ENCODE measurements at regions of chr15 and their contacts with region 1.

Region 1: DNA sequence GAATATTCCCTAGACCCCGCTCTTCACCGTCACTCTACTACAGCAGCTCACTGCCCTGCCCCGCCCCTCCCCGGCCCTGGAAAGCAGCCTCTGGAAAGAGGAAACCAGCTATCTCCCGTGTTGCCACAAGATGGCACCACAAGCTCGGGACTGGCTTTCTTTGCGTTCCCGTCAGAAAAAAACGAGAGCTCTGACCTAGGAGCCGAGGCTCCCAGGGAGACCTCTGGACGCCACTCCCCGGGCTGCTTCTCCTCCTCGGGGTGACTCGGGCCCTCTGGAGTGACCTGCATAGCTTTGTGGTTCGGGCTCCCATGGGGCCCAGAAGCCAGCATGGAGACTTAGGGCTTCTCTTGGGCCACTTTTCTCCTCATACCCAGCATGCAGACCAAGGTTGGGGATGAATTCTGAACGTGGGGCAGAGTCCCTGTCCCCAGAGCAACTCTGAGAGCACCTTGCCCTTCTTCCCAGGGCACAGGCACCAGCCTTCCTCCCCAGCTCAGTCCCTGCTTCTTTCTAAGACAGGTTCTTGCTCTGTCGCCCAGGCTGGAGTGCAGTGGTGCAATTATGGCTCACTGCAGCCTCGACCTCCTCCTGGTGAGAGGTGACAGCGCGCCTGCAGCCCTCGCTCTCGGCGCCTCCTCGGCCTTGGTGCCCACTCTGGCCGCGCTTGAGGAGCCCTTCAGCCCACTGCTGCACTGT is 19.0 kb downstream of the STOML1 start:
- DNase-seq: peak; percentile 90
- H3K4me3 Mint-ChIP-seq: peak overlapping the region; percentile 10
- H3K27ac Mint-ChIP-seq: no peak overlapping the region
- H3K4me1 Mint-ChIP-seq: peaks cover 26% of the 10 kb centered on the region
- H3K27me3 Mint-ChIP-seq: peaks cover 19% of the 10 kb centered on the region

Region 2: DNA sequence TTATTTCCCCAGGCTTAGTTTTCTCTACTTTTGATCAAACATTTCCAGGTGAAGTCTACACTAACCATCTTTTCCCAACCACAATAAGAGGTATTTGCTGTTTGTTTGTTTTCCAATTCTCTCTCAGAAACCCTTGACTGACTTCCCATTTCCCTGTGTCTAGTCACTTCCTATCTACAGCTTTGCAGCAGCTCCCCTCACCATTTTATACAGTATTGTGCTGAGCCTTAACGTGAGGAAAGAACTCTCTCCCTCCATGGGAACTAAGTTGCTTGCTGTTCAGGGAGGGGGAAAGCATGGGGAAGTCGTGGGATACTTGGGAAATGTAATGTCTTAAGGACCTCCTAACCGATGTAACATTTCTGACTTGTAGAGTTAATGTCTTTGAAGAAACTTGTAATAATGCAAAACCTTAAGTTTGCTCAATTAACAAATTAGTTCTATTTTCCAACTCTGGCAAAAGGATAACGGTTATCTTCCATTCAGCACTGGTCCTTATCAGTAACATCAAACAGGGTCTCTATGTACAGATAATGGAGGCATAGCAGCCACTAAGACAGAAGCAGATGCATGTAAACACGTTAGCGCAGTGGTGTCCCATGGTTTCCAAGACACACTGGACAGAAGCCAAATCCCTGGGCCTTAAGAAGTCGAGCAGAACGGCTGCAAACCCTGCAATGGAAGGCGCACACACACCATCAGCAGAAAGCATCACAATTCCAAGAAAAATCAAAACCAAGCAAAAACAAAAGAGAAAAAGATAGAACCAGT is 379.6 kb before region 1 on chr15:
- CTCF ChIA-PET with region 1: no interaction called
- POLR2A ChIA-PET with region 1: no interaction called
- intact Hi-C with region 1: no loop called
- DNase-seq: no peak
- H3K4me3 Mint-ChIP-seq: no peak overlapping the region
- H3K27ac Mint-ChIP-seq: no peak overlapping the region
- H3K4me1 Mint-ChIP-seq: peaks cover 24% of the 10 kb centered on the region
- H3K27me3 Mint-ChIP-seq: no peaks in the 10 kb centered on the region

Region 3: GRCh38 chr15:73950831-73951561 is 22.1 kb before region 1 on chr15:
- CTCF ChIA-PET with region 1: interaction called, 15 read pairs
- POLR2A ChIA-PET with region 1: no interaction called
- intact Hi-C with region 1: no loop called
- DNase-seq: peak; percentile 81
- H3K4me3 Mint-ChIP-seq: no peak overlapping the region
- H3K27ac Mint-ChIP-seq: peak overlapping the region; percentile 52
- H3K4me1 Mint-ChIP-seq: peaks cover 6% of the 10 kb centered on the region
- H3K27me3 Mint-ChIP-seq: no peaks in the 10 kb centered on the region

Region 4: DNA sequence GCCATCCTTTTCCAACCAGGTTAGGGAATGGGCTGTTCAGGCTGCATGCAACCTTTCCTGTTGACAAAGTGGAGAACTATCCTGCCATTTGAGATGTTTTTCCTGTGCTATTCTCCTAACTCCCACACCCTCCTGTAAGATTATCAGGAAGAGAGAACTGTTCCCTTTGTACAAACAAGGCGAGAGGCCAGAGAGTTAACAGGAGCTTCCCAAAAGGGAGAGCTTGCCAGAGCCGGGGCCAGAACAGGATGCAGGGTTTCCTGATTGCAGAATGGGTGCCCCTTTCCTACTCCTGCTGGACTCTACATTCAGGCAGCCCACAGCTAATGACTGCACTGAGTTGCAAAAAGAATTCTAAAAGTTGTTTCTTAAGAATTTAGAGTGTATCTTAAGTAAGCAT is 38.5 kb after region 1 on chr15:
- CTCF ChIA-PET with region 1: interaction called, 39 read pairs
- POLR2A ChIA-PET with region 1: interaction called, 5 read pairs
- intact Hi-C with region 1: loop called (anchors 5 kb)
- DNase-seq: no peak
- H3K4me3 Mint-ChIP-seq: no peak overlapping the region
- H3K27ac Mint-ChIP-seq: no peak overlapping the region
- H3K4me1 Mint-ChIP-seq: peaks cover 51% of the 10 kb centered on the region
- H3K27me3 Mint-ChIP-seq: no peaks in the 10 kb centered on the region

Region 5: DNA sequence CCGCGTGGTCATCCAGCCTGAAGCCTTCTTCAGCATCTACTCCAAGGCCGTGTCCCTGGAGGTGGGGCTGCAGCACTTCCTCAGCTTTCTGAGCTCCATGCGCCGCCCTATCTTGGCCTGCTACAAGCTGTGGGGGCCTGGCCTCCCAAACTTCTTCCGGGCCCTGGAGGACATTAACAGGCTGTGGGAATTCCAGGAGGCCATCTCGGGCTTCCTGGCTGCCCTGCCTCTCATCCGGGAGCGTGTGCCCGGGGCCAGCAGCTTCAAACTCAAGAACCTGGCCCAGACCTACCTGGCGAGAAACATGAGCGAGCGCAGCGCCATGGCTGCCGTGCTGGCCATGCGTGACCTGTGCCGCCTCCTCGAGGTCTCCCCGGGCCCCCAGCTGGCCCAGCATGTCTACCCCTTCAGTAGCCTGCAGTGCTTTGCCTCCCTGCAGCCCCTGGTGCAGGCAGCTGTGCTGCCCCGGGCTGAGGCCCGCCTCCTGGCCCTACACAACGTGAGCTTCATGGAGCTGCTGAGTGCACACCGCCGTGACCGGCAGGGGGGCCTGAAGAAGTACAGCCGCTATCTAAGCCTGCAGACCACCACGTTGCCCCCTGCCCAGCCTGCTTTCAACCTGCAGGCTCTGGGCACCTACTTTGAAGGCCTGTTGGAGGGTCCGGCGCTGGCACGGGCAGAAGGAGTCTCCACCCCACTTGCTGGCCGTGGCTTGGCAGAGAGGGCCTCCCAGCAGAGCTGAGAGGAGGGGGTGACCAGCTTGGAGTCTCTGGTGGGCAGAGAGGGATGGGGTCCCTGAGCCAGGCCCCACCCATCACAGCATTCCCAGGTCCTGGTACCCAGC is 71.4 kb after region 1 on chr15:
- CTCF ChIA-PET with region 1: interaction called, 98 read pairs
- POLR2A ChIA-PET with region 1: no interaction called
- intact Hi-C with region 1: loop called (anchors 5 kb)
- DNase-seq: no peak
- H3K4me3 Mint-ChIP-seq: no peak overlapping the region
- H3K27ac Mint-ChIP-seq: no peak overlapping the region
- H3K4me1 Mint-ChIP-seq: peaks cover 8% of the 10 kb centered on the region
- H3K27me3 Mint-ChIP-seq: no peaks in the 10 kb centered on the region

Region 6: GRCh38 chr15:74127260-74127953 is 154.3 kb after region 1 on chr15:
- CTCF ChIA-PET with region 1: interaction called, 7 read pairs
- POLR2A ChIA-PET with region 1: no interaction called
- intact Hi-C with region 1: loop called (anchors 5 kb)
- DNase-seq: peak; percentile 89
- H3K4me3 Mint-ChIP-seq: no peak overlapping the region
- H3K27ac Mint-ChIP-seq: no peak overlapping the region
- H3K4me1 Mint-ChIP-seq: peaks cover 18% of the 10 kb centered on the region
- H3K27me3 Mint-ChIP-seq: peaks cover 59% of the 10 kb centered on the region

Region 7: GRCh38 chr15:74322181-74323076 is 349.3 kb after region 1 on chr15:
- CTCF ChIA-PET with region 1: interaction called, 13 read pairs
- POLR2A ChIA-PET with region 1: no interaction called
- intact Hi-C with region 1: loop called (anchors 2 kb)
- DNase-seq: peak; percentile 70
- H3K4me3 Mint-ChIP-seq: no peak overlapping the region
- H3K27ac Mint-ChIP-seq: no peak overlapping the region
- H3K4me1 Mint-ChIP-seq: no peaks in the 10 kb centered on the region
- H3K27me3 Mint-ChIP-seq: no peaks in the 10 kb centered on the region

Region 8: GRCh38 chr15:75036314-75036649 is 1063.1 kb after region 1 on chr15:
- CTCF ChIA-PET with region 1: no interaction called
- POLR2A ChIA-PET with region 1: no interaction called
- intact Hi-C with region 1: no loop called
- DNase-seq: no peak
- H3K4me3 Mint-ChIP-seq: no peak overlapping the region
- H3K27ac Mint-ChIP-seq: no peak overlapping the region
- H3K4me1 Mint-ChIP-seq: peaks cover 21% of the 10 kb centered on the region
- H3K27me3 Mint-ChIP-seq: no peaks in the 10 kb centered on the region

Measured in activated CD4-positive, alpha-beta memory T cell treated with anti-CD3 and anti-CD28 coated beads for 36 hours (primary cell).